ENCODE measurements at regions of chr20 and their contacts with region 1.

Region 1: GRCh38 chr20:49541733-49542513 is 26.0 kb downstream of the PTGIS start:
- ATAC-seq: peak in 7 of 8 experiments; percentile 13 to 91 (median 35)
- H3K4me3 ChIP-seq: no peak overlapping the region
- H3K27ac ChIP-seq: no peak overlapping the region
- H3K4me1 ChIP-seq: peaks cover 2% of the 10 kb centered on the region in 2 donors

Region 2: DNA sequence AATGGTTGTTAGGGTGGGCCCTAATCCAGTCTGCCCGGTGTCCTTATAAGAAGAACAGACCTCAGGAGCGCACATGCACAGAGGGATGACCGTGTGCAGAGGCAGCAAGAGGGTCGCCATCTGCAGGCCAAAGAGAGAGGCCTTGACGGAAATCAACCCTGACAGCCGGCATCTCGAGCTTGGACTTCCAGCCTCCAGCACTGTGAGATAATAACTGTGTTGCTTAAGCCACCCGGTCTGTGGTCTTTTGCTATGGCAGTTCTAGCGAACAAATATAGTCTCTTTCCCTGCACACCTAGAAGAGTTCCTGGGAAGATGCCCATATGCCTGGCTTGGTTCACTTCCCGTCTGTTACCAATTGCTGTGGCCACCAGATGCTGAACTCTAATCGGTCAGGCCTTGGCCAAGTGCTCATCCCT is 61.3 kb after region 1 on chr20:
- in situ Hi-C with region 1: loop called in 2 of 9 experiments (anchors 5 to 10 kb)
- ATAC-seq: peak in 3 of 8 experiments; percentile 26 to 59 (median 53)
- H3K4me3 ChIP-seq: no peak overlapping the region
- H3K27ac ChIP-seq: no peak overlapping the region
- H3K4me1 ChIP-seq: no peaks in the 10 kb centered on the region